WTC11 (cell line): ENCODE measurements at regions of chr15 and their contacts with region 1.

Region 1: GRCh38 chr15:86743283-86743903 is 663.7 kb downstream of the AGBL1 start:
- DNase-seq: peak; percentile 83
- ATAC-seq: peak; percentile 99
- H3K4me3 Mint-ChIP-seq: no peak overlapping the region
- H3K27ac Mint-ChIP-seq: no peak overlapping the region
- H3K4me1 Mint-ChIP-seq: peaks cover 14% of the 10 kb centered on the region
- H3K27me3 Mint-ChIP-seq: no peaks in the 10 kb centered on the region
- CTCF ChIP-seq: peak; percentile 82

Region 2: DNA sequence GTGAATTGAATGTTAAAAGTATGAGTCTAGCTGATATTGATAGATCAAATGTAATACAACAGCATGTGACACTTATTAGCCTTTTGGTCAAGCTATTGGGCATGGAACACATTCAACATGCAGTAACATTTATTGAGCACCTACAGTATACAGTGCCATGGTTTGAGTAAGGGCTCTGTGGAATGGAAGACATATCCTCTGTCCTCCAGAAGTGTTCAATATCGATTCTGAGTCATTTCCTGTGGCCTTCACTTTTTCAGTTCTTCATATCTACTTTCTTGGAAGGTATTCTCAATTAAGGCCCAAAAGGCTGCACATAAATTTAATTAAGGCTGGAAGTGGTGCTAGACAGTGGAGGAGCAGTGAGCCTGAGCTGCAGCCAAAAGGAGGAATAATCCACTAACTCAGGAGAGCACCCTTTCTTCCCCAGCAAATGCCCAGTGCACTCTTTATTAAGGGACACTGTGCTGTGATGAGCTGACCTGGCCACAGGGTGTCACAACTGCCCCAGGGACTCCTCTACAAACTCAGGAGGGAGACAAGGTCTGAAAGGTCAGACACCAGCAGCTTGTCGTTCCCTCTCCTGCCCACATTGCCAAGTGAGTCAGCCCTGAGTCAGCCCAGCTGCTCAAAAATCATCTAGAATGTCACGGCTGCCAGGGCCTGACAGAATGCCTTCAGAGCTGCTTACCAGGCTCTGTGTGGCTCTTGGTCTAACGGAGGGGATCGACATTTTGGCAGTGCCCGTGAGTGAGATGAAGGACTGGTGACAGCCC is 118.9 kb before region 1 on chr15:
- CTCF ChIA-PET with region 1: interaction called, 38 read pairs
- POLR2A ChIA-PET with region 1: no interaction called
- DNase-seq: peak; percentile 72
- ATAC-seq: peak; percentile 100
- H3K4me3 Mint-ChIP-seq: no peak overlapping the region
- H3K27ac Mint-ChIP-seq: no peak overlapping the region
- H3K4me1 Mint-ChIP-seq: peaks cover 17% of the 10 kb centered on the region
- H3K27me3 Mint-ChIP-seq: no peaks in the 10 kb centered on the region
- CTCF ChIP-seq: peak; percentile 46; the same call in 1 of the 2 replicates

Region 3: GRCh38 chr15:86653344-86654197 is 89.8 kb before region 1 on chr15:
- CTCF ChIA-PET with region 1: interaction called, 15 read pairs
- POLR2A ChIA-PET with region 1: no interaction called
- DNase-seq: no peak
- ATAC-seq: no peak; the same call in 1 of the 2 replicates
- H3K4me3 Mint-ChIP-seq: no peak overlapping the region
- H3K27ac Mint-ChIP-seq: no peak overlapping the region
- H3K4me1 Mint-ChIP-seq: peaks cover 24% of the 10 kb centered on the region
- H3K27me3 Mint-ChIP-seq: no peaks in the 10 kb centered on the region
- CTCF ChIP-seq: no peak

Region 4: GRCh38 chr15:86691091-86691663 is 52.2 kb before region 1 on chr15:
- CTCF ChIA-PET with region 1: interaction called, 13 read pairs
- POLR2A ChIA-PET with region 1: no interaction called
- DNase-seq: no peak
- ATAC-seq: no peak
- H3K4me3 Mint-ChIP-seq: no peak overlapping the region
- H3K27ac Mint-ChIP-seq: no peak overlapping the region
- H3K4me1 Mint-ChIP-seq: no peaks in the 10 kb centered on the region
- H3K27me3 Mint-ChIP-seq: peaks cover 3% of the 10 kb centered on the region; the same call in 1 of the 2 replicates
- CTCF ChIP-seq: no peak

Region 5: GRCh38 chr15:86756692-86757091 is 13.3 kb after region 1 on chr15:
- CTCF ChIA-PET with region 1: interaction called, 11 read pairs
- POLR2A ChIA-PET with region 1: no interaction called
- DNase-seq: no peak
- ATAC-seq: 0 out of 2 replicates have a peak, but pooled peaks have one; percentile 26
- H3K4me3 Mint-ChIP-seq: no peak overlapping the region
- H3K27ac Mint-ChIP-seq: no peak overlapping the region
- H3K4me1 Mint-ChIP-seq: peaks cover 8% of the 10 kb centered on the region
- H3K27me3 Mint-ChIP-seq: no peaks in the 10 kb centered on the region
- CTCF ChIP-seq: no peak

Region 6: GRCh38 chr15:86877171-86877646 is 133.8 kb after region 1 on chr15:
- CTCF ChIA-PET with region 1: no interaction called
- POLR2A ChIA-PET with region 1: no interaction called
- DNase-seq: no peak
- ATAC-seq: peak; percentile 63
- H3K4me3 Mint-ChIP-seq: no peak overlapping the region
- H3K27ac Mint-ChIP-seq: no peak overlapping the region
- H3K4me1 Mint-ChIP-seq: peaks cover 12% of the 10 kb centered on the region
- H3K27me3 Mint-ChIP-seq: no peaks in the 10 kb centered on the region
- CTCF ChIP-seq: no peak